ENCODE measurements at regions of chr7 and their contacts with region 1.

Region 1: GRCh38 chr7:148962823-148963582 is 65.3 kb downstream of the PDIA4 start:
- DNase-seq: no peak
- H3K4me3 ChIP-seq: peak overlapping the region; percentile 60
- CTCF ChIP-seq: peak; percentile 72

Region 2: GRCh38 chr7:148503875-148504487 is 459.0 kb before region 1 on chr7:
- CTCF ChIA-PET with region 1: interaction called, 97 read pairs
- POLR2A ChIA-PET with region 1: no interaction called
- DNase-seq: peak; percentile 3
- H3K4me3 ChIP-seq: no peak overlapping the region
- CTCF ChIP-seq: peak; percentile 52

Region 3: DNA sequence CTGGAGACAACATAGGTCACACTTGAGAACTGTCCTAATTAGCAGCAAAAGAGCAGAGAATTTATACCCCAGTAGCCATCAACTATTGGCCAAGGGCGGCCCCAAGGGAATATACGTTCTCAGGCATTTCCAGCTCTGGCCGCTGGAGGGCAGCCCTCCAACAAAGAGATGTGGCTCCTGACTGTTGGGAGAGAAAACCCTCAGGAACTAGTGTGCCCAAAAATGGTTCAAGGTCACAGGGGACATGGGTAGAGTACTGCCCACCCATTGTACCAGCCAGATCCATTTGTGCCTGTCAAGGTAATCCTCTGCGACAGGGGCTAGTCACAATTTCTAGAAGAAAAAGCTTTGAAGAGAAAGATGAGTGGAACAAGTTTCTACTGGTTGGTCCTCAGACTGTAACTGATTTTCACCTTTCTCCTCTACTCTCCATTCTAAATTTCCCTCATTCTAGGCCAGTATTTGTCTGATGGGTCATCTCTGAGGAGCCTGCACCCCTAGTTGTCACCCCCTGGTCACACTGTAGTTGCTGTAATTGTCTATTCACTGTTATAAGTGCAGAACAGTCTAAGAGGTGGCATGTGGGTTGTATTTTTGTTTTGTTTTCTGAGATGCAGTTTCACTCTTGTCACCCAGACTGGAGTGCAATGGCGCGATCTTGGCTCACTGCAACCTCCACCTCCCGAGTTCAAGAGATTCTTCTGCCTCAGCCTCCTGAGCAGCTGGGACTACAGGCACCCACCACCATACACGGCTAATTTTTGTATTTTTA is 387.2 kb before region 1 on chr7:
- CTCF ChIA-PET with region 1: interaction called, 40 read pairs
- POLR2A ChIA-PET with region 1: no interaction called
- DNase-seq: peak; percentile 4
- H3K4me3 ChIP-seq: no peak overlapping the region
- CTCF ChIP-seq: peak; percentile 84

Region 4: DNA sequence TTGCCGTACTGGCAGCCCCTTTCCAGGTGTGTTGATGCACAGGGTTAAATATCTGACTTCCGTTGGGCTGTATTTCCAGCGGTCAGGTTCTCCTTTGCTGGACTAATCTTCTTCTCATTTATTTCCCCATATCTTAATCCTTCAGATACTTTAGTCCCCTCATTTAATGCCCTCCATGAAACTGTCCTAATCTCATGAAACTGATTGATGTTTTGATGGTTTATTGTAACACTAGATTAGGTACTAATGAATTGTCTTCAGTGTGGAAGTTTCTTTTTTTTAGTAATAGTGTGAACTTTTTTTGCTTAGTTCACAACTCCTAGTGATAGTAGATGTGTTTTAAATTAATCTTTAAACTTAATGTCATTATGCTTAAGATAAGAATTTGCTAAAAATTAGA is 258.0 kb before region 1 on chr7:
- CTCF ChIA-PET with region 1: no interaction called
- POLR2A ChIA-PET with region 1: no interaction called
- DNase-seq: no peak
- H3K4me3 ChIP-seq: no peak overlapping the region
- CTCF ChIP-seq: no peak

Region 5: DNA sequence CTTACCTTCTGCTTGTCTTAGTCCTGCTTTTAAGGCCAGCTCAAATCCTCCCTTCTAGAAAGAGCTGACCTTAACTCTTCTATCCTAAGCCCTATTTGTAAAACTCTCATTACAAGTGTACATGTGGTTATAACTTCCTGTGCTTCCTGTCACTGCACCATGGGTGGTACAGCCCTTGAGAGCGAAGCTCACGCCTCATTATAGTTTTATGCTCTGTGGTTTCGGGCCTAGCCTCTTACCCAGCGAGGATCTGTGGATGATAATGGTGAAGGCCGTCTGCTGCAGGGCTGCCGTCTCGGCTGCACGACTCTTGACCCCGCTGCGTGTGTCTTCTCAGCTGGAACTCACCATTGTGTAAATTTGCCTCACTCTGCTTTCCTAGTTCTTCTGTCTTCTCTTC is 189.7 kb before region 1 on chr7:
- CTCF ChIA-PET with region 1: interaction called, 10 read pairs
- POLR2A ChIA-PET with region 1: no interaction called
- DNase-seq: no peak
- H3K4me3 ChIP-seq: no peak overlapping the region
- CTCF ChIP-seq: no peak

Region 6: GRCh38 chr7:148940702-148941597 is 22.1 kb before region 1 on chr7:
- CTCF ChIA-PET with region 1: interaction called, 19 read pairs
- POLR2A ChIA-PET with region 1: interaction called, 3 read pairs
- DNase-seq: peak; percentile 69
- H3K4me3 ChIP-seq: peak overlapping the region; percentile 84
- CTCF ChIP-seq: no peak

Region 7: GRCh38 chr7:148975896-148976295 is 12.9 kb after region 1 on chr7:
- CTCF ChIA-PET with region 1: interaction called, 20 read pairs
- POLR2A ChIA-PET with region 1: interaction called, 3 read pairs
- DNase-seq: no peak
- H3K4me3 ChIP-seq: no peak overlapping the region
- CTCF ChIP-seq: no peak

Region 8: DNA sequence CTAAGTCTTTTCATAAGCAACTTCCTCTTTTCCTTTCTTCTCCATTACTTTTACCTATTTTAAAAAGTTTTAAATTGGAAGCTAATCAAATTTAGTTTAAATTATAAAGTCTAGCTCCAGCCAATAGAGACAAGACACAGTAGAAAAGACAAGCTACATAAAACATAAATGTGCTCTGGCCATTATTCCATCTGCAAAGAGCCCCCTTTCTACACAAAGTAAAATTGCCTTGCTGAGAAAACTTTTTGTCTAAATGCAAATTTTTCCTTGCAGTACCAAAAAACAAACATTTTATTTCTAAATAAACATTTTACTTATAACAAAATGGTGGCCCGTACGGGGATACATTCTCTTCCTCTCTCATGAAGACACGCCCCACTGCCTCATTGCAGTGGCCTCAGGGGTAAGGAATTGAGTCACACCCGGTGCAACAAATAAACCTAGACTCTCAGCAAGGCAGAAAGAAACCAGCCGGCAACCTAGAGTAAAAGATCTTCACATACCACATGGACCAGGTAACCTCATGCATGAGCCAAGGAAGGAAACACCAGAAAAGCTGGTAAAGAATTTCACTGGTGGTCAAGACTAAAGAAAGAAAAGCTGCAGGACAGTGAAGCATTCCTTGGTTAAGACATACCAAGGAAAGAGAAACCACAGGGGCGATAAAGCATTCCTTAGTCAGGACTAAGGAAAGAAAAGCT is 606.2 kb after region 1 on chr7:
- CTCF ChIA-PET with region 1: no interaction called
- POLR2A ChIA-PET with region 1: no interaction called
- DNase-seq: no peak
- H3K4me3 ChIP-seq: no peak overlapping the region
- CTCF ChIP-seq: no peak